Activated CD8-positive, alpha-beta T cell treated with anti-CD3 and anti-CD28 coated beads, Interleukin-2, amount 10 ng/mL, durations not matched to agents 7 days and 5 days (primary cell): ENCODE measurements at regions of chr11 and their contacts with region 1.

Region 1: DNA sequence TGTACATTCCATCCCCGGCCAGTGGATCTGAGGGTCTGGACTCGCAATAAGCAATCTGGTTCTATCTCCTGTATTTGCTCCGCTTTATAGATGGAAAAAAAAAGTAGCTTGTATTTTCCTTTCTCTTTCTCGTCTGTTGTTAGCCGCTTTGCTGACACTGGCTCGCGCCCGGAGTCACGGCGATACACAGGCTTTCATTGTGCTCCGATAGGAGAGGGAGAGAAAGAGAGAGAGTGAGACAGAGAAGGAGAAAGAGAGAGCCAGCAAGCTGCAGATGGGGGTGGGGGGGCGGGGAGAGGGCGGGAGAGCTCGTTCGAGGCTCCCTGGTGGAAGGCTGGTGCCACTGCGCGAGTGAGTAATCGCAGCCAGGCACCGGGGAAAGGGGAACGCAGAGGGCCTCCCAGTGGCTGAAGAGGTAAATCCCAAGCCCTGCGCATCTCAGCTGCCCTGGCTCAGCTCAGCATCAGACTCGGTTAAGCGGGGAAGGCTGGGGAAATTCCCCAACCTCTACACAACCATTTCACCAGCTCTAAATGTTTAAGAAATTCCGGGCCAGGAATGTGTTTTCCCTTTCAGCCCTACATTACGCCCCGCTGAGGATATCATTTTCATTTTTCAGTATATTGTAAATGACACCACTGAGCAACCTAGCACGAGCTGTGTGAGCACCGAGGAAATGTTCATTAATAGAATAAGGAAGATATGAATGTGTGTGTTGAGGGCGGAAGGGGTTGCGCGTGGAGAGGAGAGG is at the start of gene MAML2:
- DNase-seq: peak; percentile 95
- ATAC-seq: peak; percentile 83
- H3K4me3 Mint-ChIP-seq: peak within 1 kb of the TSS; percentile 91
- H3K27ac Mint-ChIP-seq: peak within 1 kb of the TSS; percentile 95
- H3K4me1 Mint-ChIP-seq: peaks cover 31% of the 10 kb centered on the region
- H3K27me3 Mint-ChIP-seq: no peaks in the 10 kb centered on the region
- total RNA-seq, gene MAML2: 14.7 to 15.5 TPM

Region 2: DNA sequence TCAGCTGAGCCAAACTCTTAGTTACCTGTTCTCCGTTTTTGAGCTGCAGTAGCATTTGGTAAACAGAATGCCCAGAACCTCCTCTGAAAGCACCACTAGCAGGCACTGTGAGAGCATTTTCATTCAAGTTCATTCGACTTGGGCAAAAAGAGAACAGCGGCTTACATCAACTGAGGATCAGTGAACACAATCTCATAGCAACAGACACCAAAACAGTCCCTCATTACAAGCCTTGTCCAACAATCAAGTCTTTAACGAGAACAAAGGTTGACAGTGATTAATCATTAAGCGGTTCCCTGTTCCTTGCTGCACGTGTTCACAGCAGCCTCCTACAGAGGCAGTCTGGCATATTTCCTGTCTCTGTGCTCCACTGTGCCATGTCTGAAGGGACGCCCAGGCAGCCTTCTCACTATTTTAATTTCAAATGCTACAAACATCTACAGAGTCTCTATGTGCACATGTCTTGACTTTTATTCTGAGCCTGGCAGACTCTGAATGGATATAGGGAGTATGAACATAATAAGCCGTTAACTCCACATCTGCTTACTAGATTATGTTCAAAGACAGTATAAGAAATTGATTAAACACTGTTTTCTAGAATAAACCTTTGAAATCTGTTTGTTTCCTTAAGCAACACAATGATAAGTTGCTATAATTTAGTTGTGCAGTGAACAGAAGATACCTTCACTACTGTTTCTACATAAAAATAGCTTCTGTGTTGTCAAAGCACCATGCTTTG is 330.9 kb before region 1 on chr11:
- CTCF ChIA-PET with region 1: interaction called, 123 read pairs
- POLR2A ChIA-PET with region 1: interaction called, 18 read pairs
- DNase-seq: peak; percentile 58
- ATAC-seq: peak; percentile 71
- H3K4me3 Mint-ChIP-seq: peak overlapping the region; percentile 3
- H3K27ac Mint-ChIP-seq: peak overlapping the region; percentile 73
- H3K4me1 Mint-ChIP-seq: peaks cover 59% of the 10 kb centered on the region
- H3K27me3 Mint-ChIP-seq: no peaks in the 10 kb centered on the region

Region 3: GRCh38 chr11:96105197-96105895 is 237.8 kb before region 1 on chr11:
- CTCF ChIA-PET with region 1: interaction called, 15 read pairs
- POLR2A ChIA-PET with region 1: no interaction called
- DNase-seq: no peak
- ATAC-seq: peak; percentile 74
- H3K4me3 Mint-ChIP-seq: no peak overlapping the region
- H3K27ac Mint-ChIP-seq: no peak overlapping the region
- H3K4me1 Mint-ChIP-seq: peaks cover 9% of the 10 kb centered on the region
- H3K27me3 Mint-ChIP-seq: no peaks in the 10 kb centered on the region

Region 4: GRCh38 chr11:96207459-96208449 is 135.4 kb before region 1 on chr11:
- CTCF ChIA-PET with region 1: interaction called, 34 read pairs
- POLR2A ChIA-PET with region 1: interaction called, 4 read pairs
- DNase-seq: peak; percentile 43
- ATAC-seq: peak; percentile 68
- H3K4me3 Mint-ChIP-seq: peak overlapping the region; percentile 42
- H3K27ac Mint-ChIP-seq: peak overlapping the region; percentile 84
- H3K4me1 Mint-ChIP-seq: peaks cover 73% of the 10 kb centered on the region
- H3K27me3 Mint-ChIP-seq: no peaks in the 10 kb centered on the region

Region 5: GRCh38 chr11:96254087-96254486 is 89.0 kb before region 1 on chr11:
- CTCF ChIA-PET with region 1: interaction called, 80 read pairs
- POLR2A ChIA-PET with region 1: interaction called, 6 read pairs
- DNase-seq: peak; percentile 37
- ATAC-seq: peak; percentile 10
- H3K4me3 Mint-ChIP-seq: peak overlapping the region; percentile 71
- H3K27ac Mint-ChIP-seq: peak overlapping the region; percentile 89
- H3K4me1 Mint-ChIP-seq: peaks cover 78% of the 10 kb centered on the region
- H3K27me3 Mint-ChIP-seq: no peaks in the 10 kb centered on the region

Region 6: DNA sequence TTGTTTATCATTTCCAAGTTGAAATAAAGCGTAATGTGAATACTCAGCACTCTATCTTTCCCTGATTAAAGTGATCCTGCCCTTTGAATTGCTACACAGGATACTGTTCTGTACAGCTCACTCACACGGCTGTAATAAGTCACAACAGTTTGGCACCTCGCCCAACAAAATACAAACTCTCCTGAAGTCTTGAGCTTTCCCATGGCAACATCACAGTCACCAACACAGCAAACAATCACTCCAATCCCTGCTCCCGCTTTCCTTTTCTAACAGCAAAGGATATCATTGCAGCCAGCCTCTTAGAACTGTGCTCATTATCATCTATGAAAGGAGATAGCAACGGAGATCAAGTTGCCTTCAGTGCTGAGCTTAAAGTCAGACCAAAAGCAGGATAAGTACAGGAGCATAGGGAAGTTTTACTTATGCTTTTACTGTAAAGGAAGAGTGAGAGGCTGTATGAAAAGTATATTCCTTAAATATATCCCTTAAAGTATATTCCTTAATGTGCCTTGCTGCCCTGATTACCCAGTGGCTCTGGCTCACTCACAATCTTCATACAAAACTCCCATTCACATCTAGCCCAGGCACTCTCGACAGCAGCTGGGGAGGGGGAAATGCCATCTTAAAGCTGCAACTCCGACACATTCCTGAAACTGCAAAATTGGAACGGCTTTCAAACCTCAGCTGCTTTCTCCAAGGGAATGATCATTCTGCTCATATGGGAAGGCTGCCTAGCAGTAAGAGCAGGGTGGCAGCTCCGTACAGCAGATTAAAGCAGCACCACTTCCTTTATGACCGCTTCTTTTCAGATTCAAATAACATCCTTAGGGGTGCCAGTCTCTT is 36.0 kb before region 1 on chr11:
- CTCF ChIA-PET with region 1: interaction called, 171 read pairs
- POLR2A ChIA-PET with region 1: interaction called, 3 read pairs
- DNase-seq: peak; percentile 27
- ATAC-seq: peak; percentile 68
- H3K4me3 Mint-ChIP-seq: peak overlapping the region; percentile 49
- H3K27ac Mint-ChIP-seq: peak overlapping the region; percentile 69
- H3K4me1 Mint-ChIP-seq: peaks cover 42% of the 10 kb centered on the region
- H3K27me3 Mint-ChIP-seq: no peaks in the 10 kb centered on the region

Region 7: DNA sequence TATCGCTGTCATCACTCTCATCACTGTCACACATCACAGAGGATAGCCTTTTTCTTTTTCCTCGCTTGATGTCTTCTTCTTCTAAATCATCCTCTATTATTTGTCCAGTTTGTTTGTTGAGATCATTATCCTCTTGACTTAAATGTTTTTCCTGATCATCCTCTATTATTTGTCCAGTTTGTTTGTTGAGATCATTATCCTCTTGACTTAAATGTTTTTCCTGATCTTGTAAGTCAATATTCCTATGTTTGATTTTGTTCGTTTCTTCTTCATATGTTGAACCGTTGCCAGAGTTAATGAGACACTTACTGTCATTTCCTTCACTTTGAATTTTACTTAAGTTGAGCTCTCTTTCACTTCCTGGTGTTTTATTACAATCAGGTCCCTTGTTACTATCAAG is 41.0 kb after region 1 on chr11:
- CTCF ChIA-PET with region 1: interaction called, 35 read pairs
- POLR2A ChIA-PET with region 1: interaction called, 22 read pairs
- DNase-seq: no peak
- ATAC-seq: no peak
- H3K4me3 Mint-ChIP-seq: no peak overlapping the region
- H3K27ac Mint-ChIP-seq: no peak overlapping the region
- H3K4me1 Mint-ChIP-seq: peaks cover 39% of the 10 kb centered on the region
- H3K27me3 Mint-ChIP-seq: no peaks in the 10 kb centered on the region